CD8-positive, alpha-beta memory T cell (primary cell): ENCODE measurements at regions of chr9 and their contacts with region 1.

Region 1: GRCh38 chr9:19271076-19271475 is 40.6 kb downstream of the DENND4C start:
- DNase-seq: no peak
- H3K4me3 ChIP-seq: no peak overlapping the region
- H3K4me3 Mint-ChIP-seq: no peak overlapping the region
- H3K27ac ChIP-seq: no peak overlapping the region
- H3K27ac Mint-ChIP-seq: no peak overlapping the region
- H3K4me1 ChIP-seq: peaks cover 5% of the 10 kb centered on the region
- H3K4me1 Mint-ChIP-seq: peaks cover 53 to 60% (median 58%) of the 10 kb centered on the region in 3 donors
- H3K27me3 ChIP-seq: no peaks in the 10 kb centered on the region
- H3K27me3 Mint-ChIP-seq: no peaks in the 10 kb centered on the region

Region 2: DNA sequence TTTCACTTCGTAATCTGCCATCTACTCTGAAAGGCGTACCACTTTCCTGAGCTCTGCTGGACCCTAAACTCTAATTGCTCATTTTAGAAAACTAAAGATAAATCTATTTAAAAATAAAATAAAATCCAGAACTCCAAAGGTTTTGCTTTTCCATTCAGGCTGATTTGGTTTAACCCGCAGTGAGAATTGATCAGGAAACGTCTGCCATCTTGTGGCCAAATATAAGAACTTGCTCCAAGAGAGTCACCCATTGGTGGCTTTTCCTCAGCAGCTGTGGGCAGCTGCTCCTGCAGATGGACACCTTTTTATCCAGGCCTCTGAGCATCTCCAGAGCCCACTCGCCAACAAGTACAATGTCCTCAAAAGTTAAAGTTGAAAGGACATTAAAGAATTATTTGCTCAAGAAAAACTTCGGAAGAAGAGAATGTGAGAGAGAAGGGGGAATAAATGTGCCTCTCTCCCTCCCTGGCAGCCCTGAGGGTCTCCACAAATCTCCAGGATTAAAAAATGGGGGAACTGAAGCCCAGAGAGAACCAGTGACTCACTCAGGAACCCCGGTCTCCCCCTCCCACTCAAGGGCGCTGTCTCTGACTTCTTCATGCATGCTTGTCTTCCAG is 242.1 kb before region 1 on chr9:
- CTCF ChIA-PET with region 1: no interaction called
- POLR2A ChIA-PET with region 1: no interaction called
- DNase-seq: peak in 1 of 5 donors; percentile 18
- H3K4me3 ChIP-seq: no peak overlapping the region
- H3K4me3 Mint-ChIP-seq: no peak overlapping the region
- H3K27ac ChIP-seq: no peak overlapping the region
- H3K27ac Mint-ChIP-seq: no peak overlapping the region
- H3K4me1 ChIP-seq: no peaks in the 10 kb centered on the region
- H3K4me1 Mint-ChIP-seq: peaks cover 0 to 4% (median 1%) of the 10 kb centered on the region in 3 donors
- H3K27me3 ChIP-seq: peaks cover 6% of the 10 kb centered on the region
- H3K27me3 Mint-ChIP-seq: peaks cover 4 to 26% of the 10 kb centered on the region in 2 donors

Region 3: GRCh38 chr9:19239955-19240354 is 31.1 kb before region 1 on chr9:
- CTCF ChIA-PET with region 1: no interaction called
- POLR2A ChIA-PET with region 1: no interaction called
- DNase-seq: no peak
- H3K4me3 ChIP-seq: no peak overlapping the region
- H3K4me3 Mint-ChIP-seq: no peak overlapping the region
- H3K27ac ChIP-seq: no peak overlapping the region
- H3K27ac Mint-ChIP-seq: no peak overlapping the region
- H3K4me1 ChIP-seq: peaks cover 4% of the 10 kb centered on the region
- H3K4me1 Mint-ChIP-seq: peaks cover 55 to 72% (median 56%) of the 10 kb centered on the region in 3 donors
- H3K27me3 ChIP-seq: no peaks in the 10 kb centered on the region
- H3K27me3 Mint-ChIP-seq: no peaks in the 10 kb centered on the region

Region 4: DNA sequence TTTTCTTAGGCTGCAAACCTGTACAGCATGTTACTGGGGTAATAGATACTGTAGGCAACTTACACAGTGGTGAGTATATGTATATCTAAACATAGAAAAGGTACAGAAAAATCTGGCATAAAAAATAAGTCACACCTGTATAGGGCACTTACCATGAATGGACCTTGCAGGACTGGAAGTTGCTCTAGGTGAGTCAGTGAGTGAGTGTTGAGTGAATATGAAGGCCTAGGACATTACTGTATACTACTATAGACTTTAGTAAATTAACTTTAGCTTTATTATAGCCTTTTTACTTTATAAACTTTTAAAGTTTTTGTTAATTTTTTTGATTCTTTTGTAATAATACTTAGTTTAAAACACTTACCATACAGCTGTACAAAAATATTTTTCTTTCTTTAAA is 10.7 kb after region 1 on chr9:
- CTCF ChIA-PET with region 1: no interaction called
- POLR2A ChIA-PET with region 1: no interaction called
- DNase-seq: no peak
- H3K4me3 ChIP-seq: no peak overlapping the region
- H3K4me3 Mint-ChIP-seq: no peak overlapping the region
- H3K27ac ChIP-seq: no peak overlapping the region
- H3K27ac Mint-ChIP-seq: peak overlapping the region in 2 of 8 donors; percentile 11 to 27
- H3K4me1 ChIP-seq: peaks cover 2% of the 10 kb centered on the region
- H3K4me1 Mint-ChIP-seq: peaks cover 49 to 71% (median 53%) of the 10 kb centered on the region in 3 donors
- H3K27me3 ChIP-seq: no peaks in the 10 kb centered on the region
- H3K27me3 Mint-ChIP-seq: peaks cover 0 to 2% of the 10 kb centered on the region in 2 donors

Region 5: GRCh38 chr9:19320495-19320894 is 49.4 kb after region 1 on chr9:
- CTCF ChIA-PET with region 1: no interaction called
- POLR2A ChIA-PET with region 1: interaction called, 14 read pairs
- DNase-seq: no peak
- H3K4me3 ChIP-seq: no peak overlapping the region
- H3K4me3 Mint-ChIP-seq: no peak overlapping the region
- H3K27ac ChIP-seq: no peak overlapping the region
- H3K27ac Mint-ChIP-seq: peak overlapping the region in 1 of 8 donors; percentile 25
- H3K4me1 ChIP-seq: no peaks in the 10 kb centered on the region
- H3K4me1 Mint-ChIP-seq: peaks cover 4 to 15% (median 10%) of the 10 kb centered on the region in 3 donors
- H3K27me3 ChIP-seq: no peaks in the 10 kb centered on the region
- H3K27me3 Mint-ChIP-seq: no peaks in the 10 kb centered on the region